Breast epithelium (tissue), 4 donors: ENCODE measurements at regions of chr10 and their contacts with region 1.

Region 1: GRCh38 chr10:26435852-26436251 is 2.3 kb upstream of the APBB1IP start:
- DNase-seq: no peak
- H3K4me3 ChIP-seq: no peak overlapping the region
- H3K27ac ChIP-seq: no peak overlapping the region
- H3K4me1 ChIP-seq: no peaks in the 10 kb centered on the region
- H3K27me3 ChIP-seq: peaks cover 3 to 16% of the 10 kb centered on the region in 2 donors
- CTCF ChIP-seq: no peak
- POLR2A ChIP-seq: no peak

Region 2: DNA sequence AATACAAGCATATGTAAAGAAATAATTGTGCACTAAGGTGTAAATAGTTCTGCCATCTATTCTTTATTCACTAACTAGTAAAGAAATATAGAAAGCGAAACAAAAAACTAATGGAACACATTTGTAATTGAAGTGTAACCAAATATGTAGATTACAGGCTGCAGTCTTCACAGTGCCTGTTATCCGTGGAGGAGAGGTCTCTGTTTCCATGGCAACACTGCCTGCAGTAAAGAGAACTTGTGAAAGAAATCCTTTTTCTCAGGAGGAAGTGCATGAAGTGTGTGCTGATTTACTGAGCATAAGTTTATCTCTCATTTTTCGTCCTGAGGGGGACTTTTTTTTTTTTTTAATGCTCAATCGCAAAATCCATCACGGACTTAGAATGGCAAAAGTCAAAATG is 104.7 kb after region 1 on chr10:
- intact Hi-C with region 1: loop called (anchors 2 kb)
- DNase-seq: no peak
- H3K4me3 ChIP-seq: no peak overlapping the region
- H3K27ac ChIP-seq: no peak overlapping the region
- H3K4me1 ChIP-seq: no peaks in the 10 kb centered on the region
- H3K27me3 ChIP-seq: no peaks in the 10 kb centered on the region
- CTCF ChIP-seq: no peak
- POLR2A ChIP-seq: no peak